ENCODE measurements at regions of chr14 and their contacts with region 1.

Region 1: GRCh38 chr14:49971156-49972130 is 78.6 kb downstream of the ARF6 start:
- DNase-seq: peak; percentile 80
- H3K4me3 Mint-ChIP-seq: peak overlapping the region; percentile 58
- H3K27ac Mint-ChIP-seq: peak overlapping the region; percentile 89
- H3K4me1 Mint-ChIP-seq: peaks cover 48% of the 10 kb centered on the region
- H3K27me3 Mint-ChIP-seq: no peaks in the 10 kb centered on the region
- CTCF ChIP-seq: no peak

Region 2: GRCh38 chr14:49820176-49820575 is 151.3 kb before region 1 on chr14:
- CTCF ChIA-PET with region 1: no interaction called
- POLR2A ChIA-PET with region 1: no interaction called
- intact Hi-C with region 1: no loop called
- DNase-seq: no peak
- H3K4me3 Mint-ChIP-seq: no peak overlapping the region
- H3K27ac Mint-ChIP-seq: no peak overlapping the region
- H3K4me1 Mint-ChIP-seq: no peaks in the 10 kb centered on the region
- H3K27me3 Mint-ChIP-seq: no peaks in the 10 kb centered on the region
- CTCF ChIP-seq: no peak

Region 3: DNA sequence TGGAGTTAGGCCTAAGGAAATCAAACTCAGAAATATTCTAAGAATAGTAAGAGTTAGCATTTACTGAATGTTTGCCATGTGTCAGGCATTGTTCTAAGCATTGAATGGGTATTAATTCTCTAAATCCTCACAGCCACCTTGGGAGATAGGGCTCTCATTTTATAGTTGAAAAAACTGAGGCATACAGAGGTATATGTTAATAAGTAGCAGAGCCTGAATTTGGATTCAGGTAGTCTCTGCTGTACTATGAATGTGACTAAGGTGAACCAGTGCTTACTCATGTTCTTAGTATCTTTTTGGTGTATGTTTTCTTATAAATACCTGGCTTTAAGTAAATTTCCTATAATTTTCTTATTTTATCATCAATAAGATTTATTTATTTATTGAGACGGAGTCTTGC is 70.5 kb before region 1 on chr14:
- CTCF ChIA-PET with region 1: no interaction called
- POLR2A ChIA-PET with region 1: interaction called, 20 read pairs
- intact Hi-C with region 1: no loop called
- DNase-seq: no peak
- H3K4me3 Mint-ChIP-seq: no peak overlapping the region
- H3K27ac Mint-ChIP-seq: no peak overlapping the region
- H3K4me1 Mint-ChIP-seq: peaks cover 18% of the 10 kb centered on the region
- H3K27me3 Mint-ChIP-seq: no peaks in the 10 kb centered on the region
- CTCF ChIP-seq: no peak

Region 4: DNA sequence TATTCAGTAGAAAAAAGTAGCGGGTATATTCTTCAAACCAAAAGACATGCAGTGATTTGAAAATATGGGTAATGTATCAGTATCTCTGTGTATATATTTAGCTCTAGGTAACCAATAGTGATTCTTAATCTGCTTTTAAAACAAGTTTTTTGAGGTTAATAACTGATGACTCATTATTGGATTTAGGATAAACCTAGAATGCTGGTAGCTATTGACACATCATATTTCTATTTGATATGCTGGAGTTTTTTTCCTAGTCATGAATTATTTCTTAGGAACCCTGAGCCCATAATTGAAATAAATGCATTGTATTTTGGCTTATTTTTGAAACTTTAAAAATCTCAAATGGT is 63.0 kb before region 1 on chr14:
- CTCF ChIA-PET with region 1: interaction called, 5 read pairs
- POLR2A ChIA-PET with region 1: interaction called, 20 read pairs
- intact Hi-C with region 1: no loop called
- DNase-seq: no peak
- H3K4me3 Mint-ChIP-seq: peak overlapping the region; percentile 51
- H3K27ac Mint-ChIP-seq: peak overlapping the region; percentile 97
- H3K4me1 Mint-ChIP-seq: peaks cover 25% of the 10 kb centered on the region
- H3K27me3 Mint-ChIP-seq: no peaks in the 10 kb centered on the region
- CTCF ChIP-seq: no peak

Region 5: GRCh38 chr14:49959822-49960408 is 11.5 kb before region 1 on chr14:
- CTCF ChIA-PET with region 1: interaction called, 17 read pairs
- POLR2A ChIA-PET with region 1: interaction called, 189 read pairs
- intact Hi-C with region 1: no loop called
- DNase-seq: no peak
- H3K4me3 Mint-ChIP-seq: no peak overlapping the region
- H3K27ac Mint-ChIP-seq: no peak overlapping the region
- H3K4me1 Mint-ChIP-seq: peaks cover 31% of the 10 kb centered on the region
- H3K27me3 Mint-ChIP-seq: no peaks in the 10 kb centered on the region
- CTCF ChIP-seq: no peak

Region 6: GRCh38 chr14:50025776-50026175 is 54.3 kb after region 1 on chr14:
- CTCF ChIA-PET with region 1: no interaction called
- POLR2A ChIA-PET with region 1: no interaction called
- intact Hi-C with region 1: no loop called
- DNase-seq: peak; percentile 57
- H3K4me3 Mint-ChIP-seq: no peak overlapping the region
- H3K27ac Mint-ChIP-seq: peak overlapping the region; percentile 51
- H3K4me1 Mint-ChIP-seq: peaks cover 15% of the 10 kb centered on the region
- H3K27me3 Mint-ChIP-seq: no peaks in the 10 kb centered on the region
- CTCF ChIP-seq: no peak